ENCODE measurements at regions of chr3 and their contacts with region 1.

Region 1: DNA sequence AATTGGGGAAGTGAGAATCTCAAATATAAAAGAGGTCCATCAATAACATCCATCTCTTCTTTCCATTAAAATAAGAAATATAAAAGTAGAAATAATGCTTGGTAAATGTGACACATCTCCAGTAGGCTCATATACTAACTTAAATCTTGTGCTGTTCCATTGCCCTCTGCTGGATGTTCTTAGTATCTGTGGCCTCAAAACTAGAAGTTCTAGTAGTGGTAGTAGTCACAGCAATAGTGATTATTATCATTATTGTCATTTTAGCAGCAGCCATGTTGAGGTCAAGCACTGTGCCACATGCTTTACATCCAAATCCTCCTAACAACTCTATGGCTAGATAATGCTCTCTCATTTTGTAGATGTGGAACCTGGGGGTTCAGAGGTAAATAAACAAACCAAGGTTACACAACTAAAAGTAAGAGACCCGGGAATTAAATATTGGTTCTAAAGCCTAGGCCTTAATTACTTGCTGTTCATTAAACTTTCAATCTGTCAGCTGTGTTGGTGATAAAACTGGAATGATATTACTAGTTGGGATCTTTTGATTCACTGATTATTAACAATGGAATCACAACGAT is 20.2 kb upstream of the BTLA start:
- DNase-seq: peak in 1 of 5 donors; percentile 26
- H3K4me3 ChIP-seq: no peak overlapping the region
- H3K27ac ChIP-seq: no peak overlapping the region
- H3K4me1 ChIP-seq: no peaks in the 10 kb centered on the region
- H3K27me3 ChIP-seq: no peaks in the 10 kb centered on the region
- CTCF ChIP-seq: peak; percentile 48 to 79 (median 79)
- EP300 ChIP-seq: no peak
- POLR2A ChIP-seq: no peak

Region 2: DNA sequence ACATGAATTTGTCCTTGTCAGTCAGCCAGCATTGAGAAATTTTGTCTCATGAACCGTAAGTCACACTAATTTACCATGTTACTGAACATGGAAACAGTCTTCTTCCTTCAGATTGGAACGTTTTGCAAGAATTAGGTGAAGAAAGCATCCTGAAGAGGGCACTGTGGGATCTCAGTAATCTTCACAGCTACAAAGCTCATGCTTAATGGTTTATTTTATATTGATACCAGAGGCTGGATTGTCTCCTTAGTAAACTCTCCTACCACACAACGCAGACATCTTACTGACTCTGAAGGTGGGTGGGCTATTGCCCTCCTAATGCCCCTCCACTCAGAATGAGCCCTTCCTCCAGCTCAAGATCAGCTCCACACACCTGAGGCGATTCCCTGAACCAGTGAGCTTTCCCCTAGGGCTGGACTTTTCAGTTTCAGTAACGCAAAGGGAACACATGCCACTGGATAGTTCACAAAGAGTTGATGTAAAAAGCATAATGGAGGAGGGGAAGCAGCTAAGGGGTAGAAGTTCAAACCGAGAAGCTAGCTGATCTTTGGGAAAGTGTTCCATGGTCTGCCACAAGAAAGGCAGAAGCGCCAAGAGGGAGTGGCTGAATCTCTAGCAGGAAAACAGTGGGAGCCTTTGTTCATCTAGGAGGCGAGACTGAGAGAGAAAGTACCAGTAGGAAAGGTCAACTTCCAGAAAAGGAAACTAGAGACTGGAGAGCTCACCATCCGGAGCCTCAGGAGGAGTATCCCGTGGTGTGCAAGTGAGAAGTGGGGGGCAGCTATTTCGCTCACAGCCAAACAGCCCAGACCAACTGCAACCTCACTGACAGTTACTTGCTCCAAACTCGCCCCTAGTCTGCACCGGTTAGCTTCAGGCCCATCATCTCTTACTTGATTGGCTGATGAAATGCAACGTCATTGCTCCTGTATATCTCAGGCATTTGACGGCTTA is 225.9 kb before region 1 on chr3 and contains the start of gene SLC9C1:
- intact Hi-C with region 1: loop called in 1 of 4 experiments (anchors 10 kb)
- DNase-seq: peak in 3 of 5 donors; percentile 24 to 59 (median 24)
- H3K4me3 ChIP-seq: peak within 1 kb of the TSS; percentile 33
- H3K27ac ChIP-seq: peak within 1 kb of the TSS in 1 of 2 donors; percentile 48
- H3K4me1 ChIP-seq: no peaks in the 10 kb centered on the region
- H3K27me3 ChIP-seq: no peaks in the 10 kb centered on the region
- CTCF ChIP-seq: peak; percentile 23 to 62 (median 58)
- EP300 ChIP-seq: no peak
- POLR2A ChIP-seq: no peak
- total RNA-seq, gene SLC9C1: 0.08 to 0.35 (median 0.22) TPM in 4 of 7 donors, not detected in the others

Region 3: DNA sequence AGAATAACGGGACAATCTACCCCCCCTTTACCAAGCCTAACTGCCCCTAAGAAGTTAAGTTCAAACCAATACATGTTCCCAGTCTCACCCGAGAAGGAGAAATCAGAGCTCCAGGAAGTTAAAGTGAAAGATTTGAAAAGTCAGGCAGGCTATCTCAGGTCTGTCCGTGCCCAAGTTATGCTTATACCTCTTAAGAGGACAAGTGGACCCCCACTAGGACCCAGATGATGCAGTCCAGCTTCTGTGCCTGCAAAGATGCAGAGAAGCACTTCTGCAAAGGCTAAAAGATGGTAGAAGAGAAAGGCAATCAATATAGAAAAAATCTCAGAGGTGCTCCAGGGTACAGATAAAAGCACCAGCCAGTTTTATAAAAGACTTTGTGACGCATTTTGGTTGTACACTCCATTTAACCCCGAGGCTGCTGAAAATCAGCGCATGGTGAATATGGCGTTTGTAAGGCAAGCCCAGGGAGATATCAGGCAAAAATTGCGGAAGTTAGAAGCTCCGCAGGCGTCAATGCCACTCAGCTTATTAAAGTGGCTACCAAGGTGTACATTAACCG is 215.7 kb before region 1 on chr3:
- intact Hi-C with region 1: loop called in 2 of 4 experiments (anchors 10 kb)
- DNase-seq: peak in 1 of 5 donors; percentile 13
- H3K4me3 ChIP-seq: peak overlapping the region; percentile 27
- H3K27ac ChIP-seq: no peak overlapping the region
- H3K4me1 ChIP-seq: no peaks in the 10 kb centered on the region
- H3K27me3 ChIP-seq: no peaks in the 10 kb centered on the region
- CTCF ChIP-seq: no peak
- EP300 ChIP-seq: no peak
- POLR2A ChIP-seq: no peak

Region 4: DNA sequence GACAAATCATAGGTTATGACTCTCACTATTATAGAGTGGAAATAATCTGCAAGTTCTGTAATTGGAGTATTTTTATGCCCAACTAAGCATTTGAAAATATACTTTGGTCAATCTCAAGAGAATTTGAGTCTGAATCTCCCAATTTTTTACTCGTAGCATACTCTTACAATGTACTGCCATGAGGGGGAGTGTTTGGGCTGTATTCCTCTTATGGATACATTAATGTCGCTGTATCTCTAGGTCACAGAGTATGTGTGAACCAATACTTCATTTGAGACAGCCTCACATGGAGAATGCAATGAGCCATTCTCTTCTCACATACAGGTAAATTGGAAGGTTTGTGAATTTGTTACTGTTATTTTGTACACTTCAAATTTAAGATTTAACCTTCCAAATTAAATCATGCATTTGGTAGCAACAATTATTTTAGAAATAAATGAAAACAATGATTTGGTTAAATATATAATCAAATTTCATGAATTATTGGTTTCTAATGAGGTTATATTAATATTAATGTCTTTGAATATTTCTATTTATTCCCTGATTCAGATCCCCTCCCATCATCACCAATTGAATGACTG is 192.1 kb before region 1 on chr3:
- intact Hi-C with region 1: loop called in 2 of 4 experiments (anchors 5 to 10 kb)
- DNase-seq: peak in 1 of 5 donors; percentile 38
- H3K4me3 ChIP-seq: no peak overlapping the region
- H3K27ac ChIP-seq: no peak overlapping the region
- H3K4me1 ChIP-seq: no peaks in the 10 kb centered on the region
- H3K27me3 ChIP-seq: no peaks in the 10 kb centered on the region
- CTCF ChIP-seq: peak in 2 of 3 donors; percentile 48 to 53
- EP300 ChIP-seq: no peak
- POLR2A ChIP-seq: no peak

Measured in ovary (tissue), 10 donors.